ENCODE measurements at regions of chr4 and their contacts with region 1.

Region 1: DNA sequence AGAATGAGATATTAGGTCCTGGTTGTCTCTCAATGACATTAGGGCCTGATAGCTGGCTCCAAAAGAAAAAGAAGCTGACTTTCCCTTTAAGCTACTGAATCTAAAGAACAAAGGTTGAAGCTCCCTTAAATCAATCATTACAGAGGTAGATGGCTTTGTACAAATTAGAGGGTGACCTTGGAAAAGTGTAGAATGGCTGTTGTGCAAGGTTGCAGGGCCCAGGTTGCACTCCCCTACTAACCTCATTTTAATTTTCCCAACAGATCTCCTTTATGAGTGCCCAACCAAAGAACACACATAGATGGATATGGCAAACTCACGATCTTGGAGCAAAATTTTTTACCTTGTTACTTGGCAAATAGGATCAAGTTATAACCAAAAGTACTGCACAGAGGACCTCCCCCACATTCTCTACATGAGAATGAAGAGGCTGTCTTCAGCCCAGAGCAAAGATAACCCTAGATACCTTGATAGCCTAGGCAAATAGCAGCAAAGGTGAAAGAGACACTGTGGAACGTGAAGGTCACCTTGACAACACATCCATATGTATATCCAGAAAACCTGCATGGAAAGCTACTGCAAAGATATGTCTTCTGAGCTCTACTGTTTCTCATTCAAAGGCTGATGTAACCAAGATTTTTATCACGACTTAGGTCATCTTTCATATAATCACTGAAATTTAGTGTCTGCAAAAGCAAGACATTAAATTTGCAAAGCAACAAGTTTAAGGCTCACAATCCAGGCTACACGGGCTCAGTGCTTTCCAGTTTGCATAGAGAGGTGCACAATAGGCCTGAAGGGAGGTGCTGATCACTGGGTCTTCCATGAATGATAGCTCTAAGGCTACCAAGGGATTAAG is 23.0 kb downstream of the KLB start:
- DNase-seq: no peak
- H3K4me3 ChIP-seq: no peak overlapping the region
- H3K27me3 ChIP-seq: no peaks in the 10 kb centered on the region; the same call in 1 of the 2 replicates
- CTCF ChIP-seq: no peak

Region 2: GRCh38 chr4:39415678-39416283 is 13.9 kb before region 1 on chr4:
- CTCF ChIA-PET with region 1: interaction called, 4 read pairs
- POLR2A ChIA-PET with region 1: interaction called, 11 read pairs
- DNase-seq: no peak
- H3K4me3 ChIP-seq: no peak overlapping the region
- H3K27me3 ChIP-seq: no peaks in the 10 kb centered on the region; the same call in 1 of the 2 replicates
- CTCF ChIP-seq: no peak

Measured in BJ (cell line).